Calu3 (cell line): ENCODE measurements at regions of chr18 and their contacts with region 1.

Region 1: DNA sequence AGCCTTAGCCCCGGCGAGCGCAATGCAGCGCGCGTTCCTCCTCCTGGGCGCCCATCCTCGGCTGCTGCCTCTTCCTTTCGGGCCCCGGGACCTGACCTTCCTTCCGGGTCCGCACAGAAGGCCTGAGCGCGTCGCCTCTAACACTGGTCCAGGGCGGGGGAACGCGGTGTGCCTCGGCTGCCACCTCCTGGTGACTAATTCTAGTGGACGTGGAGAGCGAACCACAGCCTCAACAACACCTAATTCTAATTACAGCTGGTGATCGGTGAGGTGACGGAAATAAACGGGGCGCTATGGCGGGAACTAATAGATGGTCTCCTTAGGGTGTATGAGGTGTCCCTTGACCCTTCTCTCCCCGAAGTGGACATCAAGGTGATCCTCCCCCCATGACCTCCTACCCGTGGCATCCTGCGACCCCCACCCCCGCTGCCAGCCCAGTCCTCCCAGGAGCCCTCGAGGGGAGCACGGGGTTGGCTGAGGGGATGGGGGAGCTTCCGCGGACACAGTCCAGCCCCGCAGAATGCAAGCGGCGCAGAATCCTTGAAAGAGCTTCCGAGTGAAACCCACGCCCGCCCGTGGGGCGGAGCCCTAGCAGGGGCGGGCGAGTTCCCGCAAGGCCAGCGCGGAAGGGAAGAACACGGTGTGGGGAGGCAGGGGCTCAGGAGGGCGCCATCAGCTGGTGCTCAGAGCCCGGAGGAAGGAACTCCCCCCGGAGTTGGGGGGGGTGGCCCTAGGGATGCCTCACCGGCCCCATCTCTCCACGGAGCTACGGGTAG is 12.8 kb upstream of the HMSD start:
- DNase-seq: peak; percentile 89
- H3K4me3 Mint-ChIP-seq: no peak overlapping the region
- H3K27ac Mint-ChIP-seq: no peak overlapping the region
- H3K4me1 Mint-ChIP-seq: no peaks in the 10 kb centered on the region
- H3K27me3 Mint-ChIP-seq: no peaks in the 10 kb centered on the region
- CTCF ChIP-seq: peak; percentile 88

Region 2: DNA sequence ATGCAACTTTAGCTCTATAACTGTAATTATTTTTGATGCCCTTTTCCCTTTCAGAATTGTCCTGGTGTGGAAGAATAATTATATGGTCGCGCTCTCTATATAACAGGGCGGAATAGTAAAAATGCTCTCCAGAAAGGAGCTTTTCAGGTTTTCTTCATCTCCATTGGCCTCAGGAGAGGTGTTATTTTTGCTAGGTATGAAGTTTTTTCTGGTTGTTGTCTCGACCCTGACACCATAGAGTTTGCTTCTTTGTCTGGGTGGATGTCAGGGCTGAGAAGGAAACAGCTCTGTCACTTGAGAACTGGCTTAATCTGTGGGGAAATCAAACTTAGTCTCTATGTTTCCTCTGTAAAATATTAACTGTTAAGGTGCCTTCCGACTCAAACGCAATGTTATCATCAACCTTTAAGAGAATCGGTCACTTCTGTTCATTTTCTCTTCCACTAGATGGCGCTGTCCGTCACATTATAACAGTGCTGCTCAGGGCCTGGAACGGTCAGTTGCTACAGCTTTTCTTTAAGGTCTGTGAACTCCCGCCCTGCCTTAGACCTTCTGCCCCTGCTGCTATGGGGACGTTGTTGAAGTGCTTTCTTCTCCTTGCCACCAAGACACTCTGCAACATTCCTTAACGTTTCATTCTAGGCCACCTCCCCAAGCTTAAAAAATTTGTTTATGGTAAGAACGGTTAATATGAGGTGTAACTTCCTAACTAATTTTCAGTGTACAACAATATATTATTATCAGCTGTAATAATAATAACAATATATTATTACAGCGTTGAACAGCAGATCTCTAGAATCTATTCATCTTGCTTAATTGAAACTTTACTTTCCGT is 417.9 kb before region 1 on chr18:
- CTCF ChIA-PET with region 1: interaction called, 8 read pairs
- intact Hi-C with region 1: loop called (anchors 5 kb)
- DNase-seq: peak; percentile 69
- H3K4me3 Mint-ChIP-seq: no peak overlapping the region
- H3K27ac Mint-ChIP-seq: no peak overlapping the region
- H3K4me1 Mint-ChIP-seq: peaks cover 15% of the 10 kb centered on the region
- H3K27me3 Mint-ChIP-seq: no peaks in the 10 kb centered on the region
- CTCF ChIP-seq: peak; percentile 57

Region 3: GRCh38 chr18:63578357-63578958 is 357.9 kb before region 1 on chr18:
- CTCF ChIA-PET with region 1: no interaction called
- intact Hi-C with region 1: loop called (anchors 5 kb)
- DNase-seq: peak; percentile 58
- H3K4me3 Mint-ChIP-seq: no peak overlapping the region
- H3K27ac Mint-ChIP-seq: no peak overlapping the region
- H3K4me1 Mint-ChIP-seq: no peaks in the 10 kb centered on the region
- H3K27me3 Mint-ChIP-seq: no peaks in the 10 kb centered on the region
- CTCF ChIP-seq: peak; percentile 74

Region 4: DNA sequence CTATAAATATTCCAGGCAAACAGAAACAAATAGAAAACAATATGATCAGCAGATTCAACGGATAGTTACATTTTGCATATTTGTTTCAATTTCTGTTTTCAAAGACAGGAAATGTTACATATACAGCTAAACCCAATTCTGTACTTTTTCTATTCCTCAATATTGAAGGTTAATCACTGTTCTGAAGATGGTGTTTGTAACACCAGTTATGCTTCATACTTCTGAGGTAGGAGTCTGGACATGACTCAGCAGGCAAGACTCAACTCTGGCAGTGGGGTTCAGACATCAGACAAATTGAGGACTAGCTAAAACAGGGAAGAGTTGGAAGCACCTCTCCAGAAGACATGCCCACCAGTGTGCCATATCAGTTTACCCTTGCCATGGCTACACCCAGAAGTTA is 332.6 kb before region 1 on chr18:
- CTCF ChIA-PET with region 1: no interaction called
- intact Hi-C with region 1: no loop called
- DNase-seq: no peak
- H3K4me3 Mint-ChIP-seq: no peak overlapping the region
- H3K27ac Mint-ChIP-seq: no peak overlapping the region
- H3K4me1 Mint-ChIP-seq: peaks cover 37% of the 10 kb centered on the region
- H3K27me3 Mint-ChIP-seq: no peaks in the 10 kb centered on the region
- CTCF ChIP-seq: no peak

Region 5: GRCh38 chr18:63882333-63883141 is 53.8 kb before region 1 on chr18:
- CTCF ChIA-PET with region 1: no interaction called
- intact Hi-C with region 1: loop called (anchors 2 kb)
- DNase-seq: peak; percentile 88
- H3K4me3 Mint-ChIP-seq: peak overlapping the region; percentile 41
- H3K27ac Mint-ChIP-seq: peak overlapping the region; percentile 97
- H3K4me1 Mint-ChIP-seq: peaks cover 65% of the 10 kb centered on the region
- H3K27me3 Mint-ChIP-seq: no peaks in the 10 kb centered on the region
- CTCF ChIP-seq: no peak

Region 6: GRCh38 chr18:63890950-63891304 is 45.4 kb before region 1 on chr18:
- CTCF ChIA-PET with region 1: interaction called, 3 read pairs
- intact Hi-C with region 1: loop called (anchors 2 kb)
- DNase-seq: no peak
- H3K4me3 Mint-ChIP-seq: no peak overlapping the region
- H3K27ac Mint-ChIP-seq: peak overlapping the region; percentile 58
- H3K4me1 Mint-ChIP-seq: peaks cover 22% of the 10 kb centered on the region
- H3K27me3 Mint-ChIP-seq: no peaks in the 10 kb centered on the region
- CTCF ChIP-seq: no peak